GM12878 (cell line): ENCODE measurements at regions of chr4 and their contacts with region 1.

Region 1: GRCh38 chr4:86927843-86928395 is 6.9 kb upstream of the AFF1 start:
- DNase-seq: no peak
- ATAC-seq: peak; percentile 12; the same call in 2 of the 3 replicates
- H3K4me3 ChIP-seq: no peak overlapping the region
- H3K27ac ChIP-seq: no peak overlapping the region; the same call in 1 of the 2 replicates
- H3K4me1 ChIP-seq: peaks cover 15% of the 10 kb centered on the region
- H3K27me3 ChIP-seq: no peaks in the 10 kb centered on the region
- CTCF ChIP-seq: no peak
- EP300 ChIP-seq: no peak
- POLR2A ChIP-seq: no peak
- RAD21 ChIP-seq: no peak

Region 2: GRCh38 chr4:87103691-87104187 is 175.8 kb after region 1 on chr4:
- CTCF ChIA-PET with region 1: interaction called, 70 read pairs
- POLR2A ChIA-PET with region 1: no interaction called
- RAD21 ChIA-PET with region 1: interaction called, 8 read pairs
- SMC1A ChIA-PET with region 1: interaction called, 63 read pairs
- in situ Hi-C with region 1: no loop called
- intact Hi-C with region 1: no loop called
- DNase-seq: no peak
- ATAC-seq: no peak
- H3K4me3 ChIP-seq: no peak overlapping the region
- H3K27ac ChIP-seq: no peak overlapping the region
- H3K4me1 ChIP-seq: no peaks in the 10 kb centered on the region
- H3K27me3 ChIP-seq: no peaks in the 10 kb centered on the region
- CTCF ChIP-seq: no peak
- EP300 ChIP-seq: no peak
- POLR2A ChIP-seq: no peak
- RAD21 ChIP-seq: no peak

Region 3: DNA sequence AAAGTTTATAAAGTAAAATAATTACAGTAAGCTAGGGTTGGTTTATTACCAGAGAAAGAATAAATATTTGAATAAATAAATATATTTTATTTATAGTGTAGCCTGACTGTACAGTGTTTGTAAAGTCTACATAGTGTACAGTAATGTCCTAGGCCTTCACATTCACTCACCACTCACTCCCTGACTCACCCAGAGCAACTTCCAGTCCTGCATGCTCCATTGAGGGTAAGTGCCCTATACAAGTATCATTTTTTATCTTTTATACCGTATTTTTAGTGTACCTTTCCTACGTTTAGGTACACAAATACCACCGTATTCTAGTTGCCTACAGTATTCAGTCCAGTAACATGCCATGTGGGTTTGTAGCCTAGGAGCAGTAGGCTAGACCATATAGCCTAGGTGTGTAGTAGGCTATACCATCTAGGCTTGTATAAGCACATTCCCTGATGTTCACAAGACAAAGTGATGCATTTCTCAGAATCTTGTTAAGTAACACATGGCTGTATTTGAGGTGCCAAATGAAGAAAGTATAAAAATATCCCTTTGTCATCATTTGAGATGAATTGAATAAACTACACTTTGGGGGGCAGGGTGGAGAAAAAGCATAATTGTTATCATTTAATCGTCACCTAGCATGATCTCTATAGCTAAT is 307.2 kb after region 1 on chr4:
- CTCF ChIA-PET with region 1: interaction called, 33 read pairs
- POLR2A ChIA-PET with region 1: no interaction called
- RAD21 ChIA-PET with region 1: interaction called, 26 read pairs
- SMC1A ChIA-PET with region 1: interaction called, 29 read pairs
- in situ Hi-C with region 1: loop called (anchors 5 kb)
- intact Hi-C with region 1: no loop called
- DNase-seq: no peak
- ATAC-seq: peak; percentile 32; the same call in 2 of the 3 replicates
- H3K4me3 ChIP-seq: peak overlapping the region; percentile 66; the same call in 1 of the 2 replicates
- H3K27ac ChIP-seq: no peak overlapping the region
- H3K4me1 ChIP-seq: no peaks in the 10 kb centered on the region; the same call in 1 of the 2 replicates
- H3K27me3 ChIP-seq: no peaks in the 10 kb centered on the region
- CTCF ChIP-seq: no peak
- EP300 ChIP-seq: no peak
- POLR2A ChIP-seq: no peak
- RAD21 ChIP-seq: no peak

Region 4: DNA sequence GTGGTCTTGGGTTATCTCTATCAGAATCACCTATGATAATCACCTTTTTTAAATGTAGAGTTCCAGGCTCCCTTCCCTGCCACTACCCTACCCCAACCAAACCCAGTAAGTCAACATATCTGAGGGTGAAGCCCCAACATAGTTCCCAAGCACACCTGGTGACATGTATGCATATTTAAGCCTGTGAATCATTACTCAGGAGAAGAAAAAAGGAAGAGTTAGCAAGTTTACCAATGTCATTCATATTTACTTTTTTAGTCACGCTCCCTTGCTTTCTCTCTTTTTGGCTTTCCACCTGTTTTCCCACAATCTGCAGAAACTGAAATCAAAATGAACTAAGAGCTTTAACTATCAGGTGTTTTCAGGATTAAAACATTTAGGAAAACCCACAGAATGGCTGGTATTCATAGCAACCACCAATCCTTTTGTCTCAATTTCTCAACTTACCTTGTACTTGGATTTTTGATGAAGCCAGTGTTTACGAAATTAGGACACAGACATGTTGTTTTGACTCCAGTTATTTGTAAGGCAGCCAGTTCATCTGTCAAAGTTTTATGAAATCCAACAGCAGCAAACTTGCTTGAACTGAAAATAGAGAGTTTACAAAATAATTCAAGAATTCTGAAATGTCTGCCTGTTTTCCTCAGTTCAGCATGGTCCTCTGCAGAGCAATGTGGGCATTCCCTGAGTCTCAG is 429.1 kb after region 1 on chr4:
- CTCF ChIA-PET with region 1: no interaction called
- POLR2A ChIA-PET with region 1: no interaction called
- RAD21 ChIA-PET with region 1: no interaction called
- SMC1A ChIA-PET with region 1: no interaction called
- in situ Hi-C with region 1: no loop called
- intact Hi-C with region 1: no loop called
- DNase-seq: no peak
- ATAC-seq: no peak
- H3K4me3 ChIP-seq: no peak overlapping the region
- H3K27ac ChIP-seq: no peak overlapping the region
- H3K4me1 ChIP-seq: peaks cover 9% of the 10 kb centered on the region
- H3K27me3 ChIP-seq: no peaks in the 10 kb centered on the region
- CTCF ChIP-seq: no peak
- EP300 ChIP-seq: no peak
- POLR2A ChIP-seq: no peak
- RAD21 ChIP-seq: no peak